ENCODE measurements at regions of chr14 and their contacts with region 1.

Region 1: GRCh38 chr14:105012171-105012985 is 8.5 kb downstream of the CDCA4 start:
- DNase-seq: no peak
- H3K4me3 ChIP-seq: no peak overlapping the region
- H3K4me3 Mint-ChIP-seq: no peak overlapping the region
- H3K27ac ChIP-seq: no peak overlapping the region
- H3K27ac Mint-ChIP-seq: peak overlapping the region in 6 of 7 donors; percentile 23 to 70 (median 41)
- H3K4me1 ChIP-seq: peaks cover 51% of the 10 kb centered on the region
- H3K4me1 Mint-ChIP-seq: peaks cover 44 to 56% (median 50%) of the 10 kb centered on the region in 4 donors
- H3K27me3 ChIP-seq: no peaks in the 10 kb centered on the region
- H3K27me3 Mint-ChIP-seq: no peaks in the 10 kb centered on the region

Region 2: DNA sequence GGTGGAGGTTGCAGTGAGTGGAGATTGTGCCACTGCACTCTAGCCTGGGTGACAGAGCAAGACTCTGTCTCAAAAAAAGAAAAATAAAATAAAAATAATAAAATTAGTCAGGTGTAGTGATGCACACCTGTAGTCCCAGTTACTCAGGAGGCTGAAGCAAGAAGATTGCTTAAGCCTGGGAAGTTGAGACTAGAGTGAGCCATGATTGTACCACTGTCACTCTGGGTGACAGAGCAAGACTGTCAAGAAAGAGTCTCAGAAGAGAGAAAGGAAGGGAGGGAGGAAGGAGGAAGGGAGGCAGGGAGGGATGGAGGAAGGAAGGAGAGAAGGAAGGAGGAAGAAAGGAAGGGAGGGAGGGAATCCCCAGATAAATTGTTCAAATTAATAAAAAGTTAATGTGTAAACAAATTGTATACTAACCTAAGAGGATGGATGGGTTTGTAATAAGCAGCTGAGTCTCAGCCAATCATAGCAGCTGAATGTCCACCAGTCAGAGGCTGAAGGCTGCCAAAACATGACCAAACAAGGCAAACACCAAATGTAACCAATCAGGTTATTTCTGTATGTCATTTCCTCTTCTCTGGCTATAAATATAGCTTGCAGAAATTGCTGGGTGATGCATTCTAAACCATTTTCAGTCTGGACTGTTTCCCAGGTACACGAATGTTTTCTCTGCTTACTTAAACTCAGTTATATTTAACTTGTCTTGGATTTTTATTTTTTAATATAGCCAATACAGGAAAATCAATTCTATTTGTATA is 14.6 kb after region 1 on chr14:
- CTCF ChIA-PET with region 1: no interaction called
- POLR2A ChIA-PET with region 1: interaction called, 12 read pairs
- intact Hi-C with region 1: no loop called
- DNase-seq: no peak
- H3K4me3 ChIP-seq: no peak overlapping the region
- H3K4me3 Mint-ChIP-seq: peak overlapping the region in 2 of 8 donors; percentile 15 to 36
- H3K27ac ChIP-seq: no peak overlapping the region
- H3K27ac Mint-ChIP-seq: peak overlapping the region in 4 of 7 donors; percentile 10 to 93 (median 76)
- H3K4me1 ChIP-seq: peaks cover 34% of the 10 kb centered on the region
- H3K4me1 Mint-ChIP-seq: peaks cover 10 to 49% (median 26%) of the 10 kb centered on the region in 4 donors
- H3K27me3 ChIP-seq: no peaks in the 10 kb centered on the region
- H3K27me3 Mint-ChIP-seq: no peaks in the 10 kb centered on the region

Region 3: GRCh38 chr14:105075379-105076295 is 63.3 kb after region 1 on chr14:
- CTCF ChIA-PET with region 1: no interaction called
- POLR2A ChIA-PET with region 1: no interaction called
- intact Hi-C with region 1: no loop called
- DNase-seq: no peak
- H3K4me3 ChIP-seq: no peak overlapping the region
- H3K4me3 Mint-ChIP-seq: peak overlapping the region in 2 of 8 donors; percentile 6 to 46
- H3K27ac ChIP-seq: no peak overlapping the region
- H3K27ac Mint-ChIP-seq: no peak overlapping the region
- H3K4me1 ChIP-seq: peaks cover 27% of the 10 kb centered on the region
- H3K4me1 Mint-ChIP-seq: peaks cover 16 to 48% (median 23%) of the 10 kb centered on the region in 4 donors
- H3K27me3 ChIP-seq: no peaks in the 10 kb centered on the region
- H3K27me3 Mint-ChIP-seq: no peaks in the 10 kb centered on the region